Adrenal gland (tissue), 19 donors: ENCODE measurements at regions of chr19 and their contacts with region 1.

Region 1: GRCh38 chr19:37896180-37896579 is 10.2 kb downstream of the WDR87 start:
- DNase-seq: no peak
- H3K4me3 ChIP-seq: no peak overlapping the region
- H3K27ac ChIP-seq: no peak overlapping the region
- H3K4me1 ChIP-seq: peaks cover 0 to 8% of the 10 kb centered on the region in 2 donors
- H3K27me3 ChIP-seq: no peaks in the 10 kb centered on the region
- CTCF ChIP-seq: no peak
- POLR2A ChIP-seq: no peak

Region 2: DNA sequence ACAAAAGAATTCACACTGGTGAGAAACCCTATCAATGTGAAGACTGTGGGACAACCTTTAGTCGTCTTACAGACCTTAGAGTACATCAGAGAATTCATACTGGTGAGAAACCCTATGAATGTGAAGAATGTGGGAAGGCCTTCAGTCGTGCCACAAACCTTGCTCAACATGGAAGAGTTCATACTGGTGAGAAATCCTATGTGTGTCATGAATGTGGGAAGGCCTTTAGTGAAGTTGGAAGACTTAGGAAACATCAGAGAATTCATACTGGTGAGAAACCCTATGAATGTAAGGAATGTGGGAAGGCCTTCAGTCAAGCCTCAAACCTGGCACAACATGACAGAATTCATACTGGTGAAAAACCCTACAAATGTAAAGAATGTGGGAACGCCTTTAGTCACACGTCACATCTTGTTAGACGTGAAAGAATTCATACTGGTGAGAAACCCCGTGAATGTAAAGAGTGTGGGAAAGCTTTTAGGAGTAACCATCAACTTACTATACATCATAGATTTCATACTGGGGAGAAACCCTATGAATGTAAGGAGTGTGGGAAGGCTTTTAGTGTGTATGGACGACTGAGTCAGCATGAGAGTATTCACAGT is 92.8 kb before region 1 on chr19:
- intact Hi-C with region 1: no loop called
- DNase-seq: no peak
- H3K4me3 ChIP-seq: no peak overlapping the region
- H3K27ac ChIP-seq: no peak overlapping the region
- H3K4me1 ChIP-seq: no peaks in the 10 kb centered on the region
- H3K27me3 ChIP-seq: no peaks in the 10 kb centered on the region
- CTCF ChIP-seq: no peak
- POLR2A ChIP-seq: no peak

Region 3: GRCh38 chr19:38095411-38096308 is 199.5 kb after region 1 on chr19:
- intact Hi-C with region 1: loop called (anchors 2 to 10 kb)
- DNase-seq: peak; percentile 65 to 92 (median 77)
- H3K4me3 ChIP-seq: no peak overlapping the region
- H3K27ac ChIP-seq: no peak overlapping the region
- H3K4me1 ChIP-seq: no peaks in the 10 kb centered on the region
- H3K27me3 ChIP-seq: no peaks in the 10 kb centered on the region
- CTCF ChIP-seq: peak; percentile 45 to 73 (median 66)
- POLR2A ChIP-seq: no peak

Region 4: GRCh38 chr19:38229585-38230073 is 333.4 kb after region 1 on chr19:
- intact Hi-C with region 1: loop called (anchors 5 to 10 kb)
- DNase-seq: peak; percentile 40 to 73 (median 49)
- H3K4me3 ChIP-seq: no peak overlapping the region
- H3K27ac ChIP-seq: no peak overlapping the region
- H3K4me1 ChIP-seq: peaks cover 8 to 9% of the 10 kb centered on the region in 2 donors
- H3K27me3 ChIP-seq: peaks cover 42% of the 10 kb centered on the region
- CTCF ChIP-seq: no peak
- POLR2A ChIP-seq: no peak